Calu3 (cell line): ENCODE measurements at regions of chr4 and their contacts with region 1.

Region 1: DNA sequence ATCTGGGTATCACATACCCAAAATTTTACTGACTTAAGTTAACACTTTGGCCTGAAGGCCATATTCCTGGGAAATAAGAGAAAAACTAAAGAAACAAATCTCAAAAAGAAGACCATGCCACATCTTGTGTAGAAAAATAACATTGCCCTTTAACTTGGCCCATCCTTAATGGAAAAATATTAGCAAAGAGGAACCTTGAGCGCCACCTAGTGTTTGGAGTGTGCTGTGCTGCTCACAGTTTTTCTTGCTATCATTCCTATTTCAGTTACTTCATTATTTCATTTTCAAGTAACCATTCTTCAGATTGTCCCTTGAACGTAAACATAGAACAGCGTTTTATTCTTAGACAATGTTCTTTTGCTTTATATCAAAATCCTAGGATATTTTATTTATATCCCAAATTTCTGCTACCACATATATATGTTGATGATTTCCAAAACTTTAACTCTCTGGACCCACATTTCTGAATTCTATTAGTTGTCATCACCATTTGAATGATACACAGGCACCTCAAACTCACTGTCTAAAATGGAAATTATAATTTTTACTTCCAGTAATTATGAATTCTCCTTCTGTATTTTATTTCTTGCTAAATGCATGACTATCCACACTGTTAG is 999.0 kb upstream of the ADGRL3 start:
- DNase-seq: peak; percentile 34
- H3K4me3 Mint-ChIP-seq: no peak overlapping the region
- H3K27ac Mint-ChIP-seq: no peak overlapping the region
- H3K4me1 Mint-ChIP-seq: no peaks in the 10 kb centered on the region
- H3K27me3 Mint-ChIP-seq: no peaks in the 10 kb centered on the region
- CTCF ChIP-seq: peak; percentile 49

Region 2: GRCh38 chr4:59247032-59247431 is 954.1 kb before region 1 on chr4:
- CTCF ChIA-PET with region 1: no interaction called
- intact Hi-C with region 1: loop called (anchors 2 kb)
- DNase-seq: no peak
- H3K4me3 Mint-ChIP-seq: no peak overlapping the region
- H3K27ac Mint-ChIP-seq: no peak overlapping the region
- H3K4me1 Mint-ChIP-seq: no peaks in the 10 kb centered on the region
- H3K27me3 Mint-ChIP-seq: no peaks in the 10 kb centered on the region
- CTCF ChIP-seq: no peak

Region 3: DNA sequence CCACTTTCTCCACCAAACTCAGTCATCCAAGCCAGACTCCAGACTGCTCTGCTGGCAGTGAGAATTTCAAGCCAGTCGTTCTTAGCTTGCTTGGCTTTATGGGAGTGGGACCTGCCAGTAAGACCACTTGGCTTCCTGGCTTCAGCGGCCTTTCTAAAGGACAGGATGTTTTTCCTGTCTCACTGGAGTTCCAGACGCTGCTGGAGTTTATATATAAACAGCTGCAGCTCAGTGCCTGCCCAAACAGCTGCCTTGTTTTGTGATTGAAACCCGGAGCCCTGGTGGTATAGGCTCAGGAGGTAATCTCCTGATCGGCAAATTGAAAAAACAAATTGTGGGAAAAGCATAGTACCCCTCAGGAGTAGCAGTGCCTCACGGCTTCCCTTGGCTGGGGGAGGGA is 166.8 kb before region 1 on chr4:
- CTCF ChIA-PET with region 1: no interaction called
- intact Hi-C with region 1: no loop called
- DNase-seq: no peak
- H3K4me3 Mint-ChIP-seq: no peak overlapping the region
- H3K27ac Mint-ChIP-seq: no peak overlapping the region
- H3K4me1 Mint-ChIP-seq: no peaks in the 10 kb centered on the region
- H3K27me3 Mint-ChIP-seq: no peaks in the 10 kb centered on the region
- CTCF ChIP-seq: no peak

Region 4: DNA sequence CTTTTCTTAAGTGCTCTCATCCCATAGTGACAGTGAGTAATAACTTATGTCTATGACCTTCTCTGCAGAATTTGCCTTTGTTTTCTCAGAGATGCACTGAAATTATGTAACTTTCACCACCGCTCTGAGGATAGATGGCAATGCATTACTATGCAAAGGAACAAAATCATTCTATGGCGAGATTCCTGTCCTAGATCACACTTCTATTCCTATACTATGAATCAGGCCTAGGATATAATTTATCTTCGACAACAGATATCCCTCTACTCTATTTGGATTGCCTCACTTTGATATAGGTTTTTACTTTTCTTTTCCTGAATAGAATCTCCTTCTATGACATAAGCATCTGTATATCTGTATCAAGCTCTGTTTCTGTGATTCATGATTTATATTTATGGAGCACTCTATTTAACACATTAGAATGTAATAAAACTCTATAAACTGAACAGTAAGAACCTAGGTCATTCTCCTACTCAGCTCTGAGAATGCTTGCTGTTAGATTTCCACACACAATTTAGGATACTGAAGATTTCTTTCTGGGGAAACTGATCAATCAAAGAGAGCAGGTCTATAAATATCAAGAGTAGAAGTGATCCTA is 83.3 kb before region 1 on chr4:
- CTCF ChIA-PET with region 1: no interaction called
- intact Hi-C with region 1: no loop called
- DNase-seq: no peak
- H3K4me3 Mint-ChIP-seq: no peak overlapping the region
- H3K27ac Mint-ChIP-seq: no peak overlapping the region
- H3K4me1 Mint-ChIP-seq: no peaks in the 10 kb centered on the region
- H3K27me3 Mint-ChIP-seq: no peaks in the 10 kb centered on the region
- CTCF ChIP-seq: no peak